Astrocyte of the cerebellum (primary cell): ENCODE measurements at regions of chr1 and their contacts with region 1.

Region 1: DNA sequence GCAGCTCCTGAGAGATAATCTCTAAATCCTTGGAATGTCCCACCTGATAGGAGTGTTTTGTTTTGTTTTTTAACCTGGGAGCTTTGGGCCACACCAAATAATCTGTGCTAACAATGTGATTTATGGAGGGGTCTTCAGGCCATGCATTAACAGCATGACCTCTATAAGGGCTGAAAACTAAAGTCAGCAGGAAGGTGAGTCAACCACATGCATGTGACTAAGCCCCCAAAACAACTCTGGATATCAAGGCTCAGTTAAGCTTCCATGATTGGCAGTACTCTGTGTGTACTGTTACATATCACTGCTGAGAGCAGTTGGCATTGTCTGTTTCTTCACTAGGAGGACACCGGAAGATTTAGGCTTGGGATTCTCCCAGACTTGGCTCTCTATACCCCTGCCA is 10.7 kb downstream of the AUNIP start:
- DNase-seq: no peak
- H3K4me3 ChIP-seq: no peak overlapping the region
- CTCF ChIP-seq: no peak

Region 2: DNA sequence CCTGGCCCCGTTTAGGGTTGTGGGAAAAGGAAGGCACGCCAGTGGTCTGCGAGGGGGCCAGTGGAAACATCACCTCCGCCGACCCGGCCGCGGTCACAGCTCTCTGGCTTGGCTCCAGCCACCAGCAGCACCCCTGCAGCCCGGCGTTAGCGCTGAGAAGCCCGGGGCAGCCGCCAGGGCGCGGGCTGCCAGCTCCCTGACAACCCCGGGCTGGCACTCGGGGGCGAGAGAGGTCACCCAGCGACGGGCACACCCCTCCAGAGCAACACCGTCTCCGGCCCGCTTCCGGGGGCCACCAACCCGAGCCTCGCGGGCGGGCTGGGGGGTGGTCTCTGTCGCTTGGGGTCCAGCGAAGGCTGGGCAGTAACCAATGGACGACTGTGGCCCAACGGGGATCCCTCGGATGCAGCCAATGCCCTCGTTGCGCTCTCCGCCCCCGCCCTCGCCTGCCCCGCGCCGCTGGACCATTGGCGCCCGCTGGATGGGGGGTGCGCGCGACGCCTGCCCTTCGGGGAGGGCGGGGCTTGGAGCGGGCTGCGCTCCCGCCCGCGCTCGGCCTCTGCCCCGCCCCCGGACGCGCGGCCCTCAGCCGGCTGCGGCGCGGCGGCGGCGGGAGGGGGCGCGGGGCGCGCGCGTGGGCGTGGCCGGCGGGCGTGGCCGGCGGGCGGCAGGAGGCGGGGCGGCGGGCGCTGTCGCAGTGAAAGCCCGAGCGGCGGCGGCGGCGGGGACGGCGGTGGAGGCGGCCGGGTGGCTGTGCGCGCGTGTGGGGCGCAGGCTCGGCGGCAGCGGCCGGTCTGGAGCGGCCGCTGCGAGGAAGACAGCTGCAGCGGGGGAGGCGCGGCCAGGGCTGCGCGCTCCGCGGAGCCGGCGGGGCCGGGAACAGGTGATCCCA is 232.2 kb before region 1 on chr1 and contains the start of gene MAN1C1:
- in situ Hi-C with region 1: no loop called
- DNase-seq: peak; percentile 39
- H3K4me3 ChIP-seq: peak within 1 kb of the TSS; percentile 52
- CTCF ChIP-seq: peak; percentile 36

Region 3: DNA sequence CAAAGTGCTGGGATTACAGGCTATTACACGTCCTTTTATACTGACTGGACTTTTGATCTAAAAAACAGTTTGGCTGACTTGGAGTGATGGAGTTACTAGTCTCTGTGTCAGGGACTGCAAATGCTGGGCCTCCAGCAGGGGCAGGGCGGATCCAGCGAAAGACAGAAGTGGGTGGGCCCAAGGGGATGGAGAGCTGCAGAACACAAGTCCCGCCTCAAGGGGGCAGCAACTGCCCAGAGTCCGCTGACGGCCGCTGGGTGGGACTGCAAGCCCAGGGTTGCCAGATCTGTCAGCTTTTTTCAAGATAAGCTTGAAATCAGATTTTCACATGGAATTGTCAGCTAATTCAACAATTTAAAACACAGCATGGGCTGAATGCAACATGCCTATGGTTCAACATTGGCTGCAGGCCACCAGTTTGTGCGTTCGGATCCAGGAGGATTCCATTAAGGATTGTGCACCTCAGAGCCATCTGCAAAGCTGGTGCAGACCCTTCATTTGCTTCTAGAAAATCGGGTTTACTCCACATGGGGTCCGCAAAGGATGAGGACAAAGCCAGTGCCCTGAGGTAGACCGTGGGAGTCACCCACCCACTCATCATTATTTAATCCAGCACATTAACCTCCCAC is 46.9 kb after region 1 on chr1:
- in situ Hi-C with region 1: loop called (anchors 5 kb)
- DNase-seq: peak; percentile 85
- H3K4me3 ChIP-seq: no peak overlapping the region
- CTCF ChIP-seq: peak; percentile 98